Gastrocnemius medialis (tissue), 4 donors: ENCODE measurements at regions of chr17 and their contacts with region 1.

Region 1: DNA sequence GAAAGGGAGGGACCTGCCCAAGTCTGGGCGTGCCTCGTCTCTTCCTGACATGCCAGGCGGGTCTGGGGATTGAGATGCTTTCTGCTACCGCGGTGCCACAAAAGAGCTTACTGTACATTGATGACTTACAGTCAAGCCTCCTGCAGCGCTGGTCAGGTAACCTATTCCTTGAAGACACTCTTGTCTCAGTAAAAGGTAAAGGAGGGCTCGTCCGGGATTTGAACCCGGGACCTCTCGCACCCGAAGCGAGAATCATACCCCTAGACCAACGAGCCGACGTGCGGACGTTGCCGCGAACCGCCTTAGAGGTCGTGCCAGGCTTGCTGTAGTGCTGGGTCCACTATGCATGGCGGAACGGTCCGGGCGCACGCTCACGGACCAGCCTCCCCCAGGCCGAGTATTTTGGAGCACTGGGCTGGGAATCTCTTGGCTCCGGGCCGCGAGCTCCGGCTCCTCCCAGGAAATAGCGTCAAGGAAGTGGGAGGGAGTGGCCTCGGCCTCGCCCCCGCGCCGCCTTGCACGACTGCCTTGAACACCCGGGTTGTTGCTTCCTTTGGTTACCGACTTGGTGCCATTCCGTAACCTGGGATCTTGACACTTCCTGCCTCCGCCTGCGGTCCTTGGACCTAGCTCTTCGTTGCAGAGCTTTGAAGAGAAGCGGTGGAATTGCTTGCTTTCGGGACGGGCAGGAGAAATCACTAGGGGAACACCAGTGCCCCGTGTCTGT is 12.4 kb upstream of the AURKB start:
- DNase-seq: peak; percentile 88 to 95
- ATAC-seq: peak; percentile 51 to 55
- H3K4me3 ChIP-seq: peak overlapping the region; percentile 64 to 91 (median 67)
- H3K27ac ChIP-seq: peak overlapping the region; percentile 89 to 99 (median 94)
- H3K4me1 ChIP-seq: peaks cover 11 to 13% of the 10 kb centered on the region in 2 donors
- H3K27me3 ChIP-seq: no peaks in the 10 kb centered on the region
- CTCF ChIP-seq: no peak
- POLR2A ChIP-seq: peak; percentile 63 to 65

Region 2: GRCh38 chr17:7809086-7809790 is 413.6 kb before region 1 on chr17:
- in situ Hi-C with region 1: no loop called
- intact Hi-C with region 1: no loop called
- DNase-seq: no peak
- ATAC-seq: no peak
- H3K4me3 ChIP-seq: no peak overlapping the region
- H3K27ac ChIP-seq: no peak overlapping the region
- H3K4me1 ChIP-seq: no peaks in the 10 kb centered on the region
- H3K27me3 ChIP-seq: no peaks in the 10 kb centered on the region
- CTCF ChIP-seq: no peak
- POLR2A ChIP-seq: no peak

Region 3: GRCh38 chr17:8162233-8162996 is 60.4 kb before region 1 on chr17 and contains the start of gene VAMP2:
- in situ Hi-C with region 1: no loop called
- intact Hi-C with region 1: loop called (anchors 2 kb)
- DNase-seq: peak in 1 of 2 donors; percentile 79
- ATAC-seq: peak; percentile 50 to 55
- H3K4me3 ChIP-seq: peak within 1 kb of the TSS; percentile 74 to 92 (median 78)
- H3K27ac ChIP-seq: peak within 1 kb of the TSS; percentile 98 to 100 (median 99)
- H3K4me1 ChIP-seq: peaks cover 38 to 49% of the 10 kb centered on the region in 2 donors
- H3K27me3 ChIP-seq: no peaks in the 10 kb centered on the region
- CTCF ChIP-seq: peak in 3 of 5 experiments; percentile 25 to 50 (median 35)
- POLR2A ChIP-seq: peak; percentile 90 to 91
- total RNA-seq, gene VAMP2: 10.9 to 37.0 (median 25.7) TPM

Region 4: DNA sequence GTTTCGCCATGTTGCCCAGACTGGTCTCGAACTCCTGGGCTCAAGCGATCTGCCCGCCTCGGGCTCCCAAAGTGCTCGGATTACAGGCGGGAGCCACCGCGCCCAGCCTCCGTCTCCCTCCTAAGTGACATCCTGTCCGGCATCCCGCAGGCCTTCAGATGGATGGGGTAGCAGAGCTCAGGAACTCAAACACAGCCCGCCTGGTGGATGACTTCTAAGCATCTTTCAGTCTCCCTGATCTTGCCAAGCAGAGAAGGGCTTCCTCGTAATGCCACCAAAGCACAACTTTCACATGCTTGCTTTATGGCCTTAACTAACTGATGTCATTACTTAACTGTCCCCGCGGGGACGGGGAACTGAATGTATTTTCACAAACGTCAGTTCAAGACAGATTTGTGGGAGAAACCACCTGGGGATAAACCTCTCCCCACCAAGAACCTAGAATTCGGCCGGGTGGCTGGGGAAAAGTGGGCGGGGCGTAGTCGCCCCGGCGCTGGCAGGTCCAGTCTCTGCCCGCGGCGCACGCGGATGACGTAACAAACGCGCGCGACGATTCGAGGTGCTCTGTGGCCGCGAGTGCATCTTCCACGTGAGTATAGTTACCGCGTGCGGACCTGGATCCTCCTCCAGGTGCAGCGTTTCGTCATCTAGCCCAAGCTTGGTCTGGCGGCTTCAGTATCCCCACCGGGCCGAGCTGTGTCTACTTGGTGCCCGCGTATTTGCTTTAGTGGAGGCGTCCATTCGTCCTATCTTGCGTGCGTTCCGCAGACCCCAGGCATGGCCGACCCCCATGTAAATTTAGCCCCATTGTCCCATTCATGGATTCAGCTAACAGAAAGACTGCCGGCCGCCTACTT is 26.2 kb after region 1 on chr17 and contains the start of gene PFAS:
- in situ Hi-C with region 1: no loop called
- intact Hi-C with region 1: loop called (anchors 1 kb)
- DNase-seq: peak; percentile 89 to 92
- ATAC-seq: peak; percentile 80 to 81
- H3K4me3 ChIP-seq: peak within 1 kb of the TSS; percentile 82 to 99 (median 92)
- H3K27ac ChIP-seq: peak within 1 kb of the TSS; percentile 96 to 100 (median 98)
- H3K4me1 ChIP-seq: peaks cover 8 to 13% of the 10 kb centered on the region in 2 donors
- H3K27me3 ChIP-seq: no peaks in the 10 kb centered on the region
- CTCF ChIP-seq: peak in 2 of 5 experiments; percentile 11 to 33
- POLR2A ChIP-seq: peak; percentile 37 to 63
- total RNA-seq, gene PFAS: 2.6 to 8.4 (median 6.5) TPM

Region 5: DNA sequence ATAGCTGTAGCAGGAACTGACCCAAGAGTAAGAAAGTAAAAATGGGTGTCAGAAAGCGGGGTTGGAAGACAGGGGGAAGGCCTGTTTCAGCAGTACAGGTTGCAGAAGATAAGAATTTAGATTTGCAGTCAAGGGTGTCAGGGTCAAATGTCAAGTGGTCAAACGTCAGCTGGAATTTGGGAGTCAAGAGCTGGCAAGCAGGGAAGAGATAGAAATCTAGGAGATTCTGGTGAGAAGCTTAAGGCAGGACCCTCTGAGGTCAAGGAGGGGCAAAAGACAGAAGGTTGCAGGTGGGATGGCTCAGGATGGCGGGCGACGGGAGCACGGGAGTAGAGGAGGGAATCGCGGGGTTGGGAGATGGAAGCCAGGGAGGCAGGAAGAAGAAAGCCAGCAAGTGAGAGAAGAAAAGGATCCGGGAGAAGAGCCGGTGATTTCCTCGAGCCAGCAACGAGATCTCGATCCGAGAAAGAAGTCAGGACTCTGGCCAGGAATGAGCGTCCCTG is 72.1 kb after region 1 on chr17:
- in situ Hi-C with region 1: loop called in 1 of 4 experiments (anchors 10 kb)
- intact Hi-C with region 1: no loop called
- DNase-seq: no peak
- ATAC-seq: peak; percentile 29 to 35
- H3K4me3 ChIP-seq: peak overlapping the region; percentile 72 to 90 (median 83)
- H3K27ac ChIP-seq: peak overlapping the region; percentile 95 to 97 (median 96)
- H3K4me1 ChIP-seq: peaks cover 9 to 11% of the 10 kb centered on the region in 2 donors
- H3K27me3 ChIP-seq: no peaks in the 10 kb centered on the region
- CTCF ChIP-seq: no peak
- POLR2A ChIP-seq: no peak

Region 6: GRCh38 chr17:8435245-8436168 is 212.7 kb after region 1 on chr17 and contains the start of gene NDEL1:
- in situ Hi-C with region 1: no loop called
- intact Hi-C with region 1: loop called (anchors 5 kb)
- DNase-seq: peak; percentile 98
- ATAC-seq: peak; percentile 88 to 91
- H3K4me3 ChIP-seq: peak within 1 kb of the TSS; percentile 76 to 94 (median 84)
- H3K27ac ChIP-seq: peak within 1 kb of the TSS; percentile 92 to 99 (median 98)
- H3K4me1 ChIP-seq: peaks cover 21 to 22% of the 10 kb centered on the region in 2 donors
- H3K27me3 ChIP-seq: no peaks in the 10 kb centered on the region
- CTCF ChIP-seq: no peak
- POLR2A ChIP-seq: peak; percentile 99 to 100
- total RNA-seq, gene NDEL1: 31.3 to 60.6 (median 41.5) TPM